B cell (primary cell): ENCODE measurements at regions of chr10 and their contacts with region 1.

Region 1: DNA sequence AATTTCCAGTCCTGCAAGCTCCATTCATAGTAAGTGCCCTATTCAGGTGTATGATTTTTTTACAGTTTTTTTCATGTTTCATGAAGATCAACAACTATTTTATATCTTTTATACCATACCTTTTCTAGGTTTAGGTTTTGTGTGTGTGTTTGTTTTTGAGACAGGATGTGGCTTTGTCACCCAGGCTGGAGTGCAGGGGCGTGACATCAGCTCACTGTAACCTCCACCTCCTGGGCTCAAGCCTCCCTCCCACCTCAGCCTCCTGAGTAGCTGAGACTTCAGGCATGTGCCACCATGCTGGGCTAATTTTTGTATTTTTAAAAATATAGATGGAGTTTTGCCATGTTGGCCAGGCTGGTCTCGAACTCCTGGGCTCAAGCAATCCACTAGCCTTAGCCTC is 35.0 kb downstream of the ARMH3 start:
- DNase-seq: no peak
- ATAC-seq: no peak
- H3K4me3 ChIP-seq: no peak overlapping the region
- H3K4me3 Mint-ChIP-seq: no peak overlapping the region
- H3K27ac ChIP-seq: no peak overlapping the region
- H3K27ac Mint-ChIP-seq: no peak overlapping the region
- H3K4me1 ChIP-seq: no peaks in the 10 kb centered on the region
- H3K4me1 Mint-ChIP-seq: no peaks in the 10 kb centered on the region
- H3K27me3 ChIP-seq: no peaks in the 10 kb centered on the region
- H3K27me3 Mint-ChIP-seq: no peaks in the 10 kb centered on the region
- CTCF ChIP-seq: no peak

Region 2: DNA sequence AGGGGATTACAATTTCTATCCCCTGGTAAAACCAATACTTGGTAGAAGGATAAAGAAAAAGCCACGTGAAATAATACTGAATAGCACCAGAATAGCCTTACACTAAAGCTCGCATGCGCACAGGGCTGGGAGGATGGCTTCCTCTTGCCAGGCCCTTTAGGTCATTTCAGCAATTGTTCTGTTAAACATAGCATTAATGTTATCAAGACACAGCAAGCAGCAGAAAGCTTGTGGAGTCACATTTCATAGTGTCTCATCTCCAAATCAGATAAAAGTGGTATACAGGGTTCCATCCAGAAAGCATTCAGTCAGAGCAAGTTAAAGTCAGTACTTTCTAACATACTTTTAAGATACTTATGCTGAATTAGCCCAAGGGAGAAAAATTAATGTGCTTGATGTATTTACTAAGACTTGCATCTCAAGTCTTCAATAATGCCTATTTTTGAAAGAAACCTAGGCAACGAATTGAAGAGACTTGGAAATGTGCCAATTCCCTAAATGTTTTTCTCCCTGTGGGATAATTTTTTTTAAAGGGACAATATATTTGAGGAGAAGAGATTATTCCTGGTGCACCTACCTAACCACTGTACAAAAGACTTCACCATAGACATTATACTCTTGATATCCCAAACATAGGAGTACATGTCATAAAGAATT is 223.4 kb before region 1 on chr10:
- CTCF ChIA-PET with region 1: interaction called, 3 read pairs
- POLR2A ChIA-PET with region 1: interaction called, 12 read pairs
- intact Hi-C with region 1: no loop called
- DNase-seq: no peak
- ATAC-seq: no peak
- H3K4me3 ChIP-seq: no peak overlapping the region
- H3K4me3 Mint-ChIP-seq: no peak overlapping the region
- H3K27ac ChIP-seq: no peak overlapping the region
- H3K27ac Mint-ChIP-seq: no peak overlapping the region
- H3K4me1 ChIP-seq: no peaks in the 10 kb centered on the region
- H3K4me1 Mint-ChIP-seq: peaks cover 6% of the 10 kb centered on the region
- H3K27me3 ChIP-seq: no peaks in the 10 kb centered on the region
- H3K27me3 Mint-ChIP-seq: no peaks in the 10 kb centered on the region
- CTCF ChIP-seq: no peak

Region 3: GRCh38 chr10:101830322-101831168 is 190.4 kb before region 1 on chr10:
- CTCF ChIA-PET with region 1: interaction called, 13 read pairs
- POLR2A ChIA-PET with region 1: no interaction called
- intact Hi-C with region 1: no loop called
- DNase-seq: peak; percentile 99
- ATAC-seq: peak; percentile 73
- H3K4me3 ChIP-seq: peak overlapping the region; percentile 3 to 72 (median 58)
- H3K4me3 Mint-ChIP-seq: peak overlapping the region; percentile 94
- H3K27ac ChIP-seq: peak overlapping the region; percentile 89 to 96
- H3K27ac Mint-ChIP-seq: peak overlapping the region; percentile 99
- H3K4me1 ChIP-seq: peaks cover 35 to 58% of the 10 kb centered on the region in 2 donors
- H3K4me1 Mint-ChIP-seq: peaks cover 45% of the 10 kb centered on the region
- H3K27me3 ChIP-seq: no peaks in the 10 kb centered on the region
- H3K27me3 Mint-ChIP-seq: no peaks in the 10 kb centered on the region
- CTCF ChIP-seq: no peak

Region 4: GRCh38 chr10:101889256-101890210 is 131.4 kb before region 1 on chr10:
- CTCF ChIA-PET with region 1: interaction called, 986 read pairs
- POLR2A ChIA-PET with region 1: no interaction called
- intact Hi-C with region 1: no loop called
- DNase-seq: peak; percentile 83
- ATAC-seq: peak; percentile 79
- H3K4me3 ChIP-seq: peak overlapping the region in 1 of 5 experiments; percentile 18
- H3K4me3 Mint-ChIP-seq: peak overlapping the region; percentile 1
- H3K27ac ChIP-seq: peak overlapping the region; percentile 17 to 75
- H3K27ac Mint-ChIP-seq: peak overlapping the region; percentile 59
- H3K4me1 ChIP-seq: peaks cover 23 to 43% of the 10 kb centered on the region in 2 donors
- H3K4me1 Mint-ChIP-seq: peaks cover 48% of the 10 kb centered on the region
- H3K27me3 ChIP-seq: no peaks in the 10 kb centered on the region
- H3K27me3 Mint-ChIP-seq: no peaks in the 10 kb centered on the region
- CTCF ChIP-seq: peak; percentile 90

Region 5: GRCh38 chr10:101974091-101974971 is 46.6 kb before region 1 on chr10:
- CTCF ChIA-PET with region 1: no interaction called
- POLR2A ChIA-PET with region 1: no interaction called
- intact Hi-C with region 1: no loop called
- DNase-seq: no peak
- ATAC-seq: no peak
- H3K4me3 ChIP-seq: peak overlapping the region in 1 of 5 experiments; percentile 56
- H3K4me3 Mint-ChIP-seq: peak overlapping the region; percentile 90
- H3K27ac ChIP-seq: peak overlapping the region; percentile 77 to 80
- H3K27ac Mint-ChIP-seq: peak overlapping the region; percentile 97
- H3K4me1 ChIP-seq: peaks cover 54 to 58% of the 10 kb centered on the region in 2 donors
- H3K4me1 Mint-ChIP-seq: peaks cover 60% of the 10 kb centered on the region
- H3K27me3 ChIP-seq: no peaks in the 10 kb centered on the region
- H3K27me3 Mint-ChIP-seq: no peaks in the 10 kb centered on the region
- CTCF ChIP-seq: no peak

Region 6: DNA sequence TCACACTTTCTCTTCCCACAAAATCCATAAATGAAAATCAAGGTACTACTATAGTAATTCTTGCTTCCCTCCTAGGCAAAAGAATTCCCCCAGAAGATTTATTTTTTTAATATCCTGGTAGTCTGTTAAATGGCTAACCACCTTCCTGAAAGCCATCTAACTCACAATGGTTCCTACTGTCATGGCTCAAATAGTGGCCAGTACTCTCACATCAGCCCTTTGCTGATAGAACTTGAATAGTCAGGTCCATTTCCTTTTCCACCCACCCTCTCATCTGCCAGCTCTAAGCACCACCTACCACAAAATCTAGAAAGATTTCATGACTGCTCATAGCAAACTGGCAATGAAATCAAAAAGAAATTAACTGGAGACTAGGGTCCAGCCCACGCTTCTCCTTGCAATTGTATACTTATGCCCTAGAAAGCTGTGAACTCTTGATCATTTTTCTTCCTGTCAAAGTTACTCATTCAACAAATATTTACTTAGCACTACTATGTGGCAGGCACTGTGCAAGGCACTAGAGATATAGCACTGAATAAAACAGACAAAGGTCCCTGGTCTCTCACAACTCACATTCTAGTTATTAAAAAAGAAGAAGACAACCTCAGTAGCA is 25.4 kb before region 1 on chr10:
- CTCF ChIA-PET with region 1: no interaction called
- POLR2A ChIA-PET with region 1: no interaction called
- intact Hi-C with region 1: no loop called
- DNase-seq: no peak
- ATAC-seq: no peak
- H3K4me3 ChIP-seq: no peak overlapping the region
- H3K4me3 Mint-ChIP-seq: no peak overlapping the region
- H3K27ac ChIP-seq: peak overlapping the region in 1 of 2 donors; percentile 51
- H3K27ac Mint-ChIP-seq: peak overlapping the region; percentile 59
- H3K4me1 ChIP-seq: peaks cover 47 to 49% of the 10 kb centered on the region in 2 donors
- H3K4me1 Mint-ChIP-seq: peaks cover 45% of the 10 kb centered on the region
- H3K27me3 ChIP-seq: no peaks in the 10 kb centered on the region
- H3K27me3 Mint-ChIP-seq: no peaks in the 10 kb centered on the region
- CTCF ChIP-seq: no peak

Region 7: DNA sequence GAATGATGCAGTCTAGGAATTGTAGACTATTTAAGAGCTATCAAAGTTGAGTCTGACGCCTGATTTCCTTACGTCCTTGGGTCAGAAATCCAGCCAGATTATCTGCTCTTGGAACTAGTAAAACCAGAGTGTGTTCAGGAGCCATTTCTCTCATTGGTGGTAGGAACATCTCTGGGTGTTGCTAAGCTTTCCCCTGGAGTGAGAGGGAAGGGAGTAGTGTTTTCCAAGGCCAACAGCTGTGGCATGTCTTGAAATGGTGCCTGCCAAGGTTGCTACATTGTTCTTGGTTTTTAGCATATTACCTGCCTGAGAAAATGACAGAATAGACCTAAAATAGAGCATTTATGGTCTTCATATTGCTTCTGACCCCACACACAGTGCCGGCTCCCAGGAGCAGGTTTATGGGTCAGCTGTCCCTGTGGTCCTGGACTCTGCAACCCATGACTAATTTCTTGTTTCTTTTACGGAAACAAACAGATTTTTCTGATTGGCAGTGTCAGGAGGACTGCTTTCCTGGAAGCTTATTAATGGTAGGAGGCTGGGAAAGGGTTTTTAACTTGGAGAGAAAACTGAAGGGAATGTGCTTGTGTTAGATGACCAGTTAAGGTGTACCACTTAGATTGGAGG is 241.9 kb after region 1 on chr10:
- CTCF ChIA-PET with region 1: no interaction called
- POLR2A ChIA-PET with region 1: no interaction called
- intact Hi-C with region 1: no loop called
- DNase-seq: no peak
- ATAC-seq: no peak
- H3K4me3 ChIP-seq: no peak overlapping the region
- H3K4me3 Mint-ChIP-seq: no peak overlapping the region
- H3K27ac ChIP-seq: no peak overlapping the region
- H3K27ac Mint-ChIP-seq: no peak overlapping the region
- H3K4me1 ChIP-seq: no peaks in the 10 kb centered on the region
- H3K4me1 Mint-ChIP-seq: peaks cover 7% of the 10 kb centered on the region
- H3K27me3 ChIP-seq: no peaks in the 10 kb centered on the region
- H3K27me3 Mint-ChIP-seq: no peaks in the 10 kb centered on the region
- CTCF ChIP-seq: no peak

Region 8: GRCh38 chr10:102399217-102400089 is 378.5 kb after region 1 on chr10:
- CTCF ChIA-PET with region 1: no interaction called
- POLR2A ChIA-PET with region 1: no interaction called
- intact Hi-C with region 1: no loop called
- DNase-seq: peak; percentile 94
- ATAC-seq: peak; percentile 39
- H3K4me3 ChIP-seq: peak overlapping the region in 4 of 5 experiments; percentile 29 to 53 (median 49)
- H3K4me3 Mint-ChIP-seq: peak overlapping the region; percentile 95
- H3K27ac ChIP-seq: peak overlapping the region; percentile 74 to 80
- H3K27ac Mint-ChIP-seq: peak overlapping the region; percentile 92
- H3K4me1 ChIP-seq: peaks cover 36 to 46% of the 10 kb centered on the region in 2 donors
- H3K4me1 Mint-ChIP-seq: peaks cover 46% of the 10 kb centered on the region
- H3K27me3 ChIP-seq: no peaks in the 10 kb centered on the region
- H3K27me3 Mint-ChIP-seq: no peaks in the 10 kb centered on the region
- CTCF ChIP-seq: peak; percentile 94